Ascending aorta (tissue), 2 donors: ENCODE measurements at regions of chr6 and their contacts with region 1.

Region 1: GRCh38 chr6:2695454-2696095 is 55.1 kb downstream of the MYLK4 start:
- DNase-seq: no peak
- H3K4me3 ChIP-seq: no peak overlapping the region
- H3K27ac ChIP-seq: no peak overlapping the region
- H3K4me1 ChIP-seq: no peaks in the 10 kb centered on the region
- H3K27me3 ChIP-seq: no peaks in the 10 kb centered on the region
- CTCF ChIP-seq: peak; percentile 30 to 60 (median 46)

Region 2: DNA sequence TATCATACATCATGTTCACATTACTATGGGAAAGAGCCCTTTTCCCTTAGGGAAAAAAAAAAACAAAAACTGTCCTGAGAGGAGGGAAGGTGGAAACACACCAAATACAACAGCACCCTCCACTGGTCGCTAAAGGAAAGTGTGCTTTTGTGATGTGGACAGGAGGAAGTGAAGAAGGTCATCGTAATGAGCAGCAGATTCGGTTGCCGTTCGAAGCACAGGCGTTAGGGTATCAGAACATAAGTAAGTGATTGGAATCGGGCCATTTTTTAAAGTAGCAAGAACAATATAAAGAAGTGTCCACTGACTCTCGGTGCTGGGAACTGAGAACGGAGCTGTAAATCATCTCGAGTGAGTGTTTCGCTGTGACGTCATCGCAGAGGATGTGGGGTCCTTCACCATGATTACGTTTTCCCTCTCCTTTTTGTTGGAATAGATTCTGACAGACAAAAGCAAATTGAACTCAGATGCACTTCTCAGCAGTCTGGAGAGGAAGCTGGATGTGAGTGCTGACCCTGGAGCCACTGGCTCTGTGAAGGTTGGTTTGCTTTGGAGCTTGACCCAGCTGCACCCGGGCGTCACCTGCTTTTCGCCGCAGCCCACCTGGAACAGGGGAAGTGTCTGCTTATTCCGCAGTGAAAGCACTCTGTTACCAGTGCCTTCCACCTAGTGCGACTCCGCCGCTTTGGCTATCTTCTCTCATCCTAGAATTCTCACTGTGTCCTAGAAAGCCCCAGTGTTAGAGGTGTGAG is 246.6 kb before region 1 on chr6:
- intact Hi-C with region 1: loop called (anchors 5 kb)
- DNase-seq: peak in 1 of 2 donors; percentile 76
- H3K4me3 ChIP-seq: peak overlapping the region; percentile 42 to 62
- H3K27ac ChIP-seq: peak overlapping the region; percentile 56 to 59
- H3K4me1 ChIP-seq: peaks cover 3 to 11% of the 10 kb centered on the region in 2 donors
- H3K27me3 ChIP-seq: no peaks in the 10 kb centered on the region
- CTCF ChIP-seq: peak; percentile 45 to 84 (median 76)

Region 3: GRCh38 chr6:2738373-2738979 is 42.9 kb after region 1 on chr6:
- intact Hi-C with region 1: no loop called
- DNase-seq: peak in 1 of 2 donors; percentile 78
- H3K4me3 ChIP-seq: no peak overlapping the region
- H3K27ac ChIP-seq: no peak overlapping the region
- H3K4me1 ChIP-seq: peaks cover 0 to 6% of the 10 kb centered on the region in 2 donors
- H3K27me3 ChIP-seq: no peaks in the 10 kb centered on the region
- CTCF ChIP-seq: peak; percentile 64 to 74 (median 68)

Region 4: DNA sequence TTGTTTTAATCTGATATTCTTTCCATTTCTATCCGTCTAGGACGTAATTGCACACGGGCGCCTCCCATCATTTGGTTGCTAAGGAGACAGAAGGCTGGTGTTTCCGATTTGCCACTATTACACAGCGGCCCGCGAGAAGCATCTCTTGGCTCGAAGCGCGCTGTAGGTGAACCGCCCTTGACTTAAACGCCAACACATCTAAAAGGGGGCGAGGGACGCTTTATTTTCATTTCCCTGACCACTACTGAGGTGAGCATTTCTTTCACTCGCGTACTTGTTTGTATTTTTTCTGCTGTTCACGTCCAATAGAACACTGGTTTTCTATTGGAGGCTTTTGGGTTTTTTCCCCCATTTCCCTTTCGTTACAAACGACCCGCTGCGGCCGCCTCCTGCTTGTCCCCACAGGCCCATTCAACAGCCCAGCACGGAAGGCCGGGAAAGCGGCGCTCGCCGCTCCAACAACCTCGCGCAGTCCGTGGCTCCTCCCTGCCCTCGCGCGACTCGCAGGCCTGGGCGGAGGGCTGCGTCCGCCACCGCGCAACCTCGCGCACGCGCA is 69.1 kb after region 1 on chr6:
- intact Hi-C with region 1: no loop called
- DNase-seq: peak in 1 of 2 donors; percentile 82
- H3K4me3 ChIP-seq: peak overlapping the region; percentile 60 to 64
- H3K27ac ChIP-seq: peak overlapping the region; percentile 90
- H3K4me1 ChIP-seq: peaks cover 6 to 14% of the 10 kb centered on the region in 2 donors
- H3K27me3 ChIP-seq: no peaks in the 10 kb centered on the region
- CTCF ChIP-seq: no peak

Region 5: DNA sequence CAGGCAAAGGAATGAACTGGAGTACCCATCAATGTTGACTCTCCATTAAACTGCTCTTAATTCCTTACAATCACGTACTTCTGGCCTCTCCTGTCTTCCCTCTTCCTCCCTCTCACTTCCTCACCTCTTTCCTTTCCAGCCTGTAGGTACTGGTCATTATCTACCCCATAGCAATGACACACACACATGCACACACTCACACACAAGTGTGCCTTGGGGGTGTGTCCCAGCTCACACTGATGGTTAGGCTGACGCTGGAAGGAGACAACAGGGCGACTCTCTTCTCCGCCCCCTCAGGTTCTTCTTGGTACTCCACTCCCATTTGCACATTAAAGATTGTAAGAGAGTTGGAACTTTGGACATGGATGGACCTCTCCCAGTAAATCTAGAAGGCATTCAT is 221.5 kb after region 1 on chr6:
- intact Hi-C with region 1: no loop called
- DNase-seq: peak in 1 of 2 donors; percentile 15
- H3K4me3 ChIP-seq: no peak overlapping the region
- H3K27ac ChIP-seq: no peak overlapping the region
- H3K4me1 ChIP-seq: no peaks in the 10 kb centered on the region
- H3K27me3 ChIP-seq: no peaks in the 10 kb centered on the region
- CTCF ChIP-seq: no peak